ENCODE measurements at regions of chr21 and their contacts with region 1.

Region 1: GRCh38 chr21:42238185-42238934 is 19.4 kb downstream of the ABCG1 start:
- DNase-seq: peak in 33 of 35 experiments; percentile 29 to 83 (median 66)
- ATAC-seq: peak; percentile 26 to 41 (median 36)
- H3K4me3 ChIP-seq: peak overlapping the region in 1 of 2 donors; percentile 2
- H3K4me3 Mint-ChIP-seq: peak overlapping the region; percentile 10 to 86 (median 22)
- H3K27ac ChIP-seq: peak overlapping the region; percentile 84
- H3K27ac Mint-ChIP-seq: peak overlapping the region; percentile 78 to 79
- H3K4me1 ChIP-seq: peaks cover 54 to 75% of the 10 kb centered on the region in 2 experiments
- H3K4me1 Mint-ChIP-seq: peaks cover 69 to 77% (median 73%) of the 10 kb centered on the region in 3 donors
- H3K27me3 ChIP-seq: no peaks in the 10 kb centered on the region
- H3K27me3 Mint-ChIP-seq: no peaks in the 10 kb centered on the region

Region 2: GRCh38 chr21:42145569-42146272 is 92.6 kb before region 1 on chr21:
- CTCF ChIA-PET with region 1: interaction called, 3 to 15 read pairs
- POLR2A ChIA-PET with region 1: interaction called in 1 of 2 experiments, 3 read pairs
- DNase-seq: peak; percentile 18 to 85 (median 59)
- ATAC-seq: peak; percentile 75 to 90 (median 80)
- H3K4me3 ChIP-seq: no peak overlapping the region
- H3K4me3 Mint-ChIP-seq: no peak overlapping the region
- H3K27ac ChIP-seq: no peak overlapping the region
- H3K27ac Mint-ChIP-seq: no peak overlapping the region
- H3K4me1 ChIP-seq: peaks cover 2 to 11% of the 10 kb centered on the region in 2 experiments
- H3K4me1 Mint-ChIP-seq: peaks cover 6 to 14% (median 7%) of the 10 kb centered on the region in 3 donors
- H3K27me3 ChIP-seq: peaks cover 0 to 21% of the 10 kb centered on the region in 2 experiments
- H3K27me3 Mint-ChIP-seq: peaks cover 0 to 8% of the 10 kb centered on the region in 2 donors

Region 3: DNA sequence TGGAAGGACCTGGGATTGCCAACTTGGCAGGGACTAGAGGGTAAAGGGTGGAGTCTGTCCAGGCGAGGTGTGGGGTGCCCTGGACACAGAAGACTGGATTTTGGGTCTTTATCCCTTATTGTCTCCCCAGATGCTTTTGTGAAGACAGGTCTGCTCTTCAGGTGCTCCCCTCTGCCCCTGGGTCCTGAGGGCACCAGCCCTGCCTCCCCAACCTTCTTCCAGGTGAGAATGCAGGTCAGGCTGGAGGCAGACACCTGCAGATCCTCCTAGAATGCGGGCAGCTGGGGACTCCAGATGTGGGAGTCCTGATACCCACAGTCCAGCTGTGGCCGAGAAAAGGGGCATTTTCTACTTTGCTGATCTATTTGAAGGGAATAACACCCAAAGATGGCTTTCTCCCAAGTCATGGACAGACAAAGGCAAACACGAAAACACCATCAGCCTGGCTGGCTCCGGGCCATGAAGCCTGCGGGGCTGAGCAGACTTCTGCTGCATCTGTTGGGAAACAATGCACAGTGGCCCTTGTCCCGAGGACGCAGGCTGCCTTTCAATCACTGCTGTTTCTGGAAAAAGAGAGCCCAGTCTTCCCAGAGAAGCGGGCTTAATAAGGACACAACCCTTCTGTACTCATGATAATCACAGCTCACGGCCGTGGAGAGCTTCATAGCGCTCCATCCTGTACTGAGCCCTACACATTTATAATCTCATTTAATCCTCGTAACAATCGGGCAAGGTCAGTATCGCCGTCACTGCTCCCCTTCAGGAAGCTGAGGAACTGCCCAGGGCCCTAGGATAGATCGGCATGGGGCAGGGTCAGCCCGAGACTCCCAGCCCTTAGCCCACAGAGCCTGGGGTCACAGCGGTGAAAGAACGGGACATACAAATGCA is 81.4 kb before region 1 on chr21:
- CTCF ChIA-PET with region 1: no interaction called
- POLR2A ChIA-PET with region 1: no interaction called
- DNase-seq: no peak
- ATAC-seq: no peak
- H3K4me3 ChIP-seq: no peak overlapping the region
- H3K4me3 Mint-ChIP-seq: no peak overlapping the region
- H3K27ac ChIP-seq: no peak overlapping the region
- H3K27ac Mint-ChIP-seq: no peak overlapping the region
- H3K4me1 ChIP-seq: peaks cover 21 to 28% of the 10 kb centered on the region in 2 experiments
- H3K4me1 Mint-ChIP-seq: peaks cover 21 to 25% (median 25%) of the 10 kb centered on the region in 3 donors
- H3K27me3 ChIP-seq: peaks cover 0 to 41% of the 10 kb centered on the region in 2 experiments
- H3K27me3 Mint-ChIP-seq: peaks cover 0 to 2% of the 10 kb centered on the region in 2 donors

Region 4: GRCh38 chr21:42187976-42188653 is 50.2 kb before region 1 on chr21:
- CTCF ChIA-PET with region 1: interaction called, 4 to 11 read pairs
- POLR2A ChIA-PET with region 1: interaction called, 4 to 9 read pairs
- DNase-seq: peak; percentile 52 to 92 (median 78)
- ATAC-seq: peak; percentile 94 to 95 (median 95)
- H3K4me3 ChIP-seq: peak overlapping the region; percentile 6 to 11
- H3K4me3 Mint-ChIP-seq: peak overlapping the region; percentile 62 to 74 (median 62)
- H3K27ac ChIP-seq: peak overlapping the region; percentile 75
- H3K27ac Mint-ChIP-seq: peak overlapping the region; percentile 97 to 98
- H3K4me1 ChIP-seq: peaks cover 66 to 89% of the 10 kb centered on the region in 2 experiments
- H3K4me1 Mint-ChIP-seq: peaks cover 76 to 80% (median 79%) of the 10 kb centered on the region in 3 donors
- H3K27me3 ChIP-seq: no peaks in the 10 kb centered on the region
- H3K27me3 Mint-ChIP-seq: no peaks in the 10 kb centered on the region

Region 5: GRCh38 chr21:42220138-42220701 is 18.1 kb before region 1 on chr21:
- CTCF ChIA-PET with region 1: interaction called in 1 of 2 experiments, 29 read pairs
- POLR2A ChIA-PET with region 1: interaction called, 19 to 77 read pairs
- DNase-seq: peak in 34 of 35 experiments; percentile 57 to 95 (median 87)
- ATAC-seq: peak; percentile 83 to 91 (median 87)
- H3K4me3 ChIP-seq: peak overlapping the region; percentile 88 to 89
- H3K4me3 Mint-ChIP-seq: peak overlapping the region; percentile 81 to 87 (median 87)
- H3K27ac ChIP-seq: peak overlapping the region; percentile 89
- H3K27ac Mint-ChIP-seq: peak overlapping the region; percentile 18 to 73
- H3K4me1 ChIP-seq: peaks cover 17 to 42% of the 10 kb centered on the region in 2 experiments
- H3K4me1 Mint-ChIP-seq: peaks cover 32 to 39% (median 35%) of the 10 kb centered on the region in 3 donors
- H3K27me3 ChIP-seq: no peaks in the 10 kb centered on the region
- H3K27me3 Mint-ChIP-seq: no peaks in the 10 kb centered on the region

Region 6: GRCh38 chr21:42258153-42258884 is 20.0 kb after region 1 on chr21:
- CTCF ChIA-PET with region 1: interaction called in 1 of 2 experiments, 24 read pairs
- POLR2A ChIA-PET with region 1: interaction called, 3 to 7 read pairs
- DNase-seq: peak; percentile 62 to 89 (median 80)
- ATAC-seq: peak; percentile 81 to 94 (median 92)
- H3K4me3 ChIP-seq: no peak overlapping the region
- H3K4me3 Mint-ChIP-seq: no peak overlapping the region
- H3K27ac ChIP-seq: no peak overlapping the region
- H3K27ac Mint-ChIP-seq: peak overlapping the region in 1 of 2 donors; percentile 41
- H3K4me1 ChIP-seq: peaks cover 0 to 25% of the 10 kb centered on the region in 2 experiments
- H3K4me1 Mint-ChIP-seq: peaks cover 33 to 42% (median 37%) of the 10 kb centered on the region in 3 donors
- H3K27me3 ChIP-seq: no peaks in the 10 kb centered on the region
- H3K27me3 Mint-ChIP-seq: no peaks in the 10 kb centered on the region

Measured in T-cell (primary cell).